ENCODE measurements at regions of chr17 and their contacts with region 1.

Region 1: GRCh38 chr17:77494664-77495435 is 354.1 kb downstream of the SEC14L1 start:
- DNase-seq: peak; percentile 86
- ATAC-seq: peak; percentile 74
- H3K4me3 ChIP-seq: no peak overlapping the region
- H3K4me3 Mint-ChIP-seq: peak overlapping the region; percentile 44
- H3K27ac ChIP-seq: peak overlapping the region; percentile 28
- H3K27ac Mint-ChIP-seq: peak overlapping the region; percentile 90
- H3K4me1 ChIP-seq: peaks cover 14 to 43% of the 10 kb centered on the region in 2 donors
- H3K4me1 Mint-ChIP-seq: peaks cover 32% of the 10 kb centered on the region
- H3K27me3 ChIP-seq: no peaks in the 10 kb centered on the region
- H3K27me3 Mint-ChIP-seq: no peaks in the 10 kb centered on the region
- CTCF ChIP-seq: peak; percentile 98

Region 2: DNA sequence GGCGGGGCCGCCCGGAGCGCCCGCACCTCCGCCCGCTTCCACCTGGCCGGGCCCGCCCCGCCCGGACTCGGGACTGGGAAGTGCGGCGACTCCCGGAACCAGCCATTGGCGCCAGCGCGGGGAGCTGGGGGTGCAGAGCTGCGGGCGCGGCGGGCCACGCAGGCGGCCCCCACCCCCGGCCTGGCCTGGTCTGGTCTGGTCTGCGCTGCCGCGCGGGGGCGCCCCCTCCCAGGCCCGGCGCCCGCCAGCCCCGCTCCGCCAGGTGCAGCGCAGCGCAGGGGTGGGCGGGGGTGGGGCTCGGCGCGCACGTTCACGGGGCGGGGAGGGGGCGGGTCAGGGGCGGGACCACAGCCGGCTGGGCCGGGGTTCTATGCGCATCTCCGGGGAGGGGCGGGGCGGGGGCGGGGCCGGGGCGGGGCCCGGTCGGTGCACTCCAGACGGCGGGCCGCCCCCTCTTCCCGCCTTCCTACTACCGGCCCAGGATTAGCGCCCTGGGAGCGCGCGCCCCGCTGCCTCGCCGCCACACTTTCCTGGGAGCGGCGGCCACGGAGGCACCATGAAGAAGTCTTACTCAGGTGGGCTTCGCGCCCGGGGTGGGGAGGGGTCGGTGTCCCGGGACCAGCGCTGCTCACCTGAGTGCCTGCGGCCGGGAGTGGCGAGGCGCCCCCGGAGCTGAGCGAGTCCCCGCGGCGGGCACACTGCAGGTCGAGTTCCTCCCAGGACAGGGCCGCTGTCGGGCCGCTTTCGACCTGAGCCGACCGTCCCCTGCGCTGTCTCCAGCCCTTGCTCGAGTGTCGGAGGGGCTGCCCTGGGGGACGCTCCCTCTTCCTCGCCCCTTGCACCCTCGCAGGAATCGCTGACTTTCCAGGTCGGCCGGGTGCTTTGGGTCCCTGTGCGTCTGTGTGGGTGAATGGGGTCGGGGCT is 213.6 kb before region 1 on chr17:
- CTCF ChIA-PET with region 1: interaction called, 6 read pairs
- POLR2A ChIA-PET with region 1: no interaction called
- intact Hi-C with region 1: loop called (anchors 1 kb)
- DNase-seq: peak; percentile 84
- ATAC-seq: peak; percentile 96
- H3K4me3 ChIP-seq: peak overlapping the region in 4 of 5 experiments; percentile 45 to 66 (median 57)
- H3K4me3 Mint-ChIP-seq: peak overlapping the region; percentile 88
- H3K27ac ChIP-seq: no peak overlapping the region
- H3K27ac Mint-ChIP-seq: peak overlapping the region; percentile 94
- H3K4me1 ChIP-seq: peaks cover 25% of the 10 kb centered on the region in 2 donors
- H3K4me1 Mint-ChIP-seq: peaks cover 24% of the 10 kb centered on the region
- H3K27me3 ChIP-seq: peaks cover 0 to 26% (median 8%) of the 10 kb centered on the region in 4 experiments
- H3K27me3 Mint-ChIP-seq: peaks cover 28% of the 10 kb centered on the region
- CTCF ChIP-seq: peak; percentile 25

Region 3: DNA sequence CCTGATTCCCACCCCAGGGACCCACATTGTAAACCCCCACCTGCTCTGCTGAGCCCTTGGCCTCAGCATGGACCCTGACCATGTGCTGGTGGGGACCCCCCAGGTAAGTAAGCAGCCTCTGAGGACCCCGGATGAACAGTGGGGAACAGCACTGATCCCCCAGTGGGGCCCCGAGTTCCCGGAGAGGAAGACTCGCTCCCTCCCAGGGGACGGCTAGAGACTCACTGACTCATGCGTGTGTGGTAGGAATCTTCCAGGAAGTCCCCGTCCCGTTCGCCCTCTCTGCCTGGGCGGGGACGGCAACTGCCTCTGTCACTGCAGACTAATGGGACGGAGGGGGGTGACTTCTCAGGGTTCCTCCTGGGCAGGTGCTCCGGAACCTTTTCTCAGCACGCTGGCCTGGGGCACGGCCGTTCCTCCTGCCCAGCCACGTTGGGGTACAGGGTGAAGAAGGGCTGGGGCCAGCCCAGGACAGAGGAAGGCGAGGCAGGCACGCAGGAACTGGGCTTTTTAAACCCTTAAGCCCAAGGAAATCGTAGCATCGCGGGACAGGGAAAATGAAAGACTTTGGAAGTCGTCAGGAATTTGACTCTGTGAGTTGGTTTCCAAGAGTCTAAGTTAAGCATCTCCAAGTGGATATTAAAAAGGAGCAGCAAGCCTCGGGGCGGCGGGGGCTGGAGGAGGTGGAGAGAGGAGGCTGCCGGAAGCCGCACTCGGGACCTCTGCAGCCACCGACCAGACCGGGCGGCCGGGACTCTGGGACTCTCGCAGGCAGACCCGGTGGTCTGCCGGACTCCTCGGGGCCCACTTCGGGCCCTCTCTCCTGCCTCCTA is 175.4 kb before region 1 on chr17:
- CTCF ChIA-PET with region 1: interaction called, 12 read pairs
- POLR2A ChIA-PET with region 1: no interaction called
- intact Hi-C with region 1: no loop called
- DNase-seq: peak; percentile 84
- ATAC-seq: peak; percentile 34
- H3K4me3 ChIP-seq: peak overlapping the region in 4 of 5 experiments; percentile 16 to 51 (median 33)
- H3K4me3 Mint-ChIP-seq: peak overlapping the region; percentile 91
- H3K27ac ChIP-seq: peak overlapping the region; percentile 53 to 75
- H3K27ac Mint-ChIP-seq: peak overlapping the region; percentile 90
- H3K4me1 ChIP-seq: peaks cover 62 to 66% of the 10 kb centered on the region in 2 donors
- H3K4me1 Mint-ChIP-seq: peaks cover 65% of the 10 kb centered on the region
- H3K27me3 ChIP-seq: no peaks in the 10 kb centered on the region
- H3K27me3 Mint-ChIP-seq: no peaks in the 10 kb centered on the region
- CTCF ChIP-seq: no peak

Region 4: GRCh38 chr17:77331301-77331864 is 163.5 kb before region 1 on chr17:
- CTCF ChIA-PET with region 1: interaction called, 169 read pairs
- POLR2A ChIA-PET with region 1: interaction called, 6 read pairs
- intact Hi-C with region 1: loop called (anchors 1 kb)
- DNase-seq: peak; percentile 94
- ATAC-seq: peak; percentile 89
- H3K4me3 ChIP-seq: peak overlapping the region in 4 of 5 experiments; percentile 21 to 65 (median 36)
- H3K4me3 Mint-ChIP-seq: peak overlapping the region; percentile 82
- H3K27ac ChIP-seq: peak overlapping the region; percentile 67 to 77
- H3K27ac Mint-ChIP-seq: peak overlapping the region; percentile 85
- H3K4me1 ChIP-seq: peaks cover 41 to 66% of the 10 kb centered on the region in 2 donors
- H3K4me1 Mint-ChIP-seq: peaks cover 53% of the 10 kb centered on the region
- H3K27me3 ChIP-seq: no peaks in the 10 kb centered on the region
- H3K27me3 Mint-ChIP-seq: no peaks in the 10 kb centered on the region
- CTCF ChIP-seq: peak; percentile 93

Region 5: GRCh38 chr17:77451245-77451893 is 43.5 kb before region 1 on chr17:
- CTCF ChIA-PET with region 1: interaction called, 19 read pairs
- POLR2A ChIA-PET with region 1: interaction called, 5 read pairs
- intact Hi-C with region 1: no loop called
- DNase-seq: peak; percentile 70
- ATAC-seq: peak; percentile 59
- H3K4me3 ChIP-seq: peak overlapping the region; percentile 91 to 96 (median 92)
- H3K4me3 Mint-ChIP-seq: peak overlapping the region; percentile 93
- H3K27ac ChIP-seq: peak overlapping the region; percentile 66 to 96
- H3K27ac Mint-ChIP-seq: peak overlapping the region; percentile 96
- H3K4me1 ChIP-seq: peaks cover 67 to 86% of the 10 kb centered on the region in 2 donors
- H3K4me1 Mint-ChIP-seq: peaks cover 69% of the 10 kb centered on the region
- H3K27me3 ChIP-seq: no peaks in the 10 kb centered on the region
- H3K27me3 Mint-ChIP-seq: no peaks in the 10 kb centered on the region
- CTCF ChIP-seq: no peak

Region 6: DNA sequence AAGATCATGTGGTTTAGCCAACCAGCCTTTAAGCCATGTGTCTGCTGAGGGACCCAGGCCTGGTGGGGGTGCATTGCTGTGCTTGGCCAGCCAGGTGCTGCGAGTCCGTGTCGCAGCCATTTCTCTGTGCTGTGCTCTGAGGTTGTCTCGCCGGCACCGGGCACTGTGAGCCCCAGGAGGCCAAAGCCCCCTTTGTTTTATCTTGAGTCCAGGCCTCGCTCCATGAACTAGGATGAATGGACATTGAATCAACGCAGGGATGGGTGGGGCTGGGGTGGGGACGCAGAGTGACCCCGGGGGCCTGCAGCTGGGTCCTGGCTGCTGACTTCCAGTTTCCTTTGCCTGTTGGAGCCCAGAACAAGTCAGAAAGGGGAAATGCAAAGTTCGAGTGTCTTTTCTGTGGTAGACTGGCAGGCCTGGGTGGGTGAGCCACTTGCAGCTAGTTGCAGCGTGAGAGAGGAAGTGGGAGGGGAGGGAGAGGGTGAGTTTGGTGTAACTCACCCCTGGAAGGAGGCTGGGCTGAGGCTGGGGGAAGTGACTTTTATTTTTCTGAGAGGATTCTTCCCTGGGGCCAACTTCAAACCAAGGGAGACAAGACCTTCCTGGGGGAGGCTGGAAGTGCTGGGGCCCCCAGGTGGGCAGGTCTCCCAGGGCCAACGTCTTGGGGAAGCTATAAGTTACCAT is 29.4 kb before region 1 on chr17:
- CTCF ChIA-PET with region 1: interaction called, 13 read pairs
- POLR2A ChIA-PET with region 1: interaction called, 3 read pairs
- intact Hi-C with region 1: loop called (anchors 2 kb)
- DNase-seq: peak; percentile 94
- ATAC-seq: peak; percentile 78
- H3K4me3 ChIP-seq: peak overlapping the region; percentile 12 to 56 (median 38)
- H3K4me3 Mint-ChIP-seq: peak overlapping the region; percentile 81
- H3K27ac ChIP-seq: peak overlapping the region; percentile 55 to 89
- H3K27ac Mint-ChIP-seq: peak overlapping the region; percentile 95
- H3K4me1 ChIP-seq: peaks cover 90 to 98% of the 10 kb centered on the region in 2 donors
- H3K4me1 Mint-ChIP-seq: peaks cover 86% of the 10 kb centered on the region
- H3K27me3 ChIP-seq: no peaks in the 10 kb centered on the region
- H3K27me3 Mint-ChIP-seq: no peaks in the 10 kb centered on the region
- CTCF ChIP-seq: no peak

Region 7: DNA sequence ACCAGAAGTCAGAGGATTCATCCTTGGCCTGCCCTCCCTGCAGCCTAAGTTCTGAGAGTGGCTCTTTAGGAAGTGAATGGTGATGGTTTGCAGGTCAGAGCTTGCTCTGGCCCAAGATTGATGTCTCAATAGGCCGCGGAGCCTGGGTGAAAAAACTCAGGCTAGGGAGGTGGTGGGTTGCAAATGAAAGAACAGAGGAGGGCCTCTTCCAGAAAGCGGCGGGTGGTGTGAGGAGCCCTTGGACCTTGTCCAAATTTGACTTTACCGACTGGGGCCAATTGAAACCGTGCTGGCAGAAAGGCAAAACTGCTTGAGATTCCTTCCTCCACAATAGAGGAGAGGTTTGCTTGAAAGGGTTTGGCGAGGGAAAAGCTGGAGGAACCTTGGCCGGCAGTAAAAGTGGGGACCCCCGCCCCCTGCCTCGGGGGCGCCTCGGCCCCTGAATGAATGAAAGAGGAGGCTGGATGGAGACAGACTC is 22.8 kb before region 1 on chr17:
- CTCF ChIA-PET with region 1: interaction called, 13 read pairs
- POLR2A ChIA-PET with region 1: interaction called, 3 read pairs
- intact Hi-C with region 1: no loop called
- DNase-seq: no peak
- ATAC-seq: no peak
- H3K4me3 ChIP-seq: peak overlapping the region in 4 of 5 experiments; percentile 2 to 51 (median 19)
- H3K4me3 Mint-ChIP-seq: peak overlapping the region; percentile 73
- H3K27ac ChIP-seq: peak overlapping the region; percentile 49 to 89
- H3K27ac Mint-ChIP-seq: peak overlapping the region; percentile 75
- H3K4me1 ChIP-seq: peaks cover 89 to 97% of the 10 kb centered on the region in 2 donors
- H3K4me1 Mint-ChIP-seq: peaks cover 93% of the 10 kb centered on the region
- H3K27me3 ChIP-seq: no peaks in the 10 kb centered on the region
- H3K27me3 Mint-ChIP-seq: no peaks in the 10 kb centered on the region
- CTCF ChIP-seq: no peak

Region 8: GRCh38 chr17:77511514-77512061 is 16.7 kb after region 1 on chr17:
- CTCF ChIA-PET with region 1: no interaction called
- POLR2A ChIA-PET with region 1: no interaction called
- intact Hi-C with region 1: no loop called
- DNase-seq: no peak
- ATAC-seq: no peak
- H3K4me3 ChIP-seq: no peak overlapping the region
- H3K4me3 Mint-ChIP-seq: no peak overlapping the region
- H3K27ac ChIP-seq: no peak overlapping the region
- H3K27ac Mint-ChIP-seq: no peak overlapping the region
- H3K4me1 ChIP-seq: no peaks in the 10 kb centered on the region
- H3K4me1 Mint-ChIP-seq: no peaks in the 10 kb centered on the region
- H3K27me3 ChIP-seq: peaks cover 0 to 3% (median 0%) of the 10 kb centered on the region in 4 experiments
- H3K27me3 Mint-ChIP-seq: no peaks in the 10 kb centered on the region
- CTCF ChIP-seq: no peak

Measured in B cell (primary cell).